T-cell (primary cell): ENCODE measurements at regions of chr3 and their contacts with region 1.

Region 1: GRCh38 chr3:8499181-8499611 is 2.4 kb upstream of the LMCD1 start:
- DNase-seq: no peak
- ATAC-seq: no peak
- H3K4me3 ChIP-seq: no peak overlapping the region
- H3K4me3 Mint-ChIP-seq: no peak overlapping the region
- H3K27ac ChIP-seq: no peak overlapping the region
- H3K27ac Mint-ChIP-seq: no peak overlapping the region
- H3K4me1 ChIP-seq: peaks cover 2 to 12% of the 10 kb centered on the region in 2 experiments
- H3K4me1 Mint-ChIP-seq: peaks cover 11 to 22% (median 12%) of the 10 kb centered on the region in 3 donors
- H3K27me3 ChIP-seq: peaks cover 0 to 17% of the 10 kb centered on the region in 2 experiments
- H3K27me3 Mint-ChIP-seq: peaks cover 4 to 12% of the 10 kb centered on the region in 2 donors

Region 2: DNA sequence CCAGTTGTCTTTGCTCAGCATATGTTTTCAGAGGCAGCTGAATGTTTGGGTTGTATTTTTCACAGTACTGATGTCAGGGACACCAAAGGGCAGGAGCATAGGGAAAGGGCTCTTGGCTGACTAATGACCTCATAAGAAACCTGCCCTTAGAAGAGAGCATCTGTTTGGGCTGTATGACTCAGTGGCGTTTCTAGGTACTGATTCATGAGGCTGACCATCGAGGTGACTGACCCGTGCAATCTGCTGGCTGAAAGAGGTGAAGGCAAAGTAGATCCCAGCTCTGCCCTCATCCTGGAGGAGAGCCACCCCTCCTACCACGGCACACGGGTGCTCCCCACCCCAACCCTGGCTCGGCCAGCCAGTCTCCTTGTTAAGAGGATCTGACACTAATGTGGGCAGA is 10.8 kb after region 1 on chr3:
- CTCF ChIA-PET with region 1: no interaction called
- POLR2A ChIA-PET with region 1: interaction called in 1 of 2 experiments, 13 read pairs
- DNase-seq: no peak
- ATAC-seq: no peak
- H3K4me3 ChIP-seq: no peak overlapping the region
- H3K4me3 Mint-ChIP-seq: no peak overlapping the region
- H3K27ac ChIP-seq: no peak overlapping the region
- H3K27ac Mint-ChIP-seq: no peak overlapping the region
- H3K4me1 ChIP-seq: no peaks in the 10 kb centered on the region
- H3K4me1 Mint-ChIP-seq: no peaks in the 10 kb centered on the region
- H3K27me3 ChIP-seq: no peaks in the 10 kb centered on the region
- H3K27me3 Mint-ChIP-seq: no peaks in the 10 kb centered on the region

Region 3: GRCh38 chr3:8536096-8537056 is 37.2 kb after region 1 on chr3:
- CTCF ChIA-PET with region 1: no interaction called
- POLR2A ChIA-PET with region 1: no interaction called
- DNase-seq: no peak
- ATAC-seq: no peak
- H3K4me3 ChIP-seq: no peak overlapping the region
- H3K4me3 Mint-ChIP-seq: no peak overlapping the region
- H3K27ac ChIP-seq: no peak overlapping the region
- H3K27ac Mint-ChIP-seq: no peak overlapping the region
- H3K4me1 ChIP-seq: no peaks in the 10 kb centered on the region
- H3K4me1 Mint-ChIP-seq: no peaks in the 10 kb centered on the region
- H3K27me3 ChIP-seq: peaks cover 0 to 4% of the 10 kb centered on the region in 2 experiments
- H3K27me3 Mint-ChIP-seq: peaks cover 1 to 8% of the 10 kb centered on the region in 2 donors